ENCODE measurements at regions of chr5 and their contacts with region 1.

Region 1: GRCh38 chr5:129001841-129002526 is 36.7 kb downstream of the SLC27A6 start:
- DNase-seq: no peak
- ATAC-seq: no peak
- H3K4me3 ChIP-seq: no peak overlapping the region
- H3K4me3 Mint-ChIP-seq: no peak overlapping the region
- H3K27ac ChIP-seq: no peak overlapping the region
- H3K27ac Mint-ChIP-seq: no peak overlapping the region
- H3K4me1 ChIP-seq: no peaks in the 10 kb centered on the region
- H3K4me1 Mint-ChIP-seq: peaks cover 2% of the 10 kb centered on the region
- H3K27me3 ChIP-seq: no peaks in the 10 kb centered on the region
- H3K27me3 Mint-ChIP-seq: peaks cover 5% of the 10 kb centered on the region
- CTCF ChIP-seq: no peak

Region 2: DNA sequence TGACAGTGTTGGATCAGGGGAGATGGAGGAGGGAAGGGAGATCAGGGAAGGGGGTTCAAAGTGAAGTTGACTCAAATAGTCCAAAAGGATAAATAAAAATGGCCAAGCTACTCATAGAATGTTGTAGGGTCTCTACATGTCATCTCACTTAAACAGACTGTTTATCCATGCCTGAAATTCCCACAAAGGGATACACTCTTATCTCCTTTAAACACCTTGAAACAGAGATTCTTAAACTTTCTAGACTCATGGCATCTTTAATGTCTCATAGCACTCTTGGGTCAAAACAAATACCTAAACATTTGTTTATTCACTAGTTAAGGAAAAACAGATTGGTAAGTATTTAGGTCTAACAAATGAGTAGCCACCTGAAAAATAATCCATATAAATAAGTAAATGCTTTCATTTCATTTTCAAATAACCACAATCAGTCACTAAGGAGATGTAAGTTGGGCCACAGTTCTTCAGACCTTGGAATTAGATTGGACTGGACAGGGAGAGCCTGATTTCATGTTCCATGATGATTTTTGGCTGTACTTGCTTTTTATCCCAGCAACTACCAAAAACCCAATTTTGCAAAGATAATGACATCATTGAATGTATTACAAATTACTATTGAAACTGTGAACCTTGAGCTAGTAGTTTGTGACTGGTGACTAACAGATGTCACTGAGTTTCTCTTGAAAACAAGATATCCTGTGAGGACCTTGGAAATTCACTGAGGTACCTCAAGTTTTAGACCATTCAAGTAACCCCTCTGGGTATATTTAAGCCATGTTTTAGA is 30.1 kb after region 1 on chr5:
- CTCF ChIA-PET with region 1: no interaction called
- POLR2A ChIA-PET with region 1: no interaction called
- intact Hi-C with region 1: loop called in 1 of 2 experiments (anchors 2 kb)
- DNase-seq: no peak
- ATAC-seq: no peak
- H3K4me3 ChIP-seq: no peak overlapping the region
- H3K4me3 Mint-ChIP-seq: no peak overlapping the region
- H3K27ac ChIP-seq: no peak overlapping the region
- H3K27ac Mint-ChIP-seq: no peak overlapping the region
- H3K4me1 ChIP-seq: no peaks in the 10 kb centered on the region
- H3K4me1 Mint-ChIP-seq: no peaks in the 10 kb centered on the region
- H3K27me3 ChIP-seq: no peaks in the 10 kb centered on the region
- H3K27me3 Mint-ChIP-seq: peaks cover 14% of the 10 kb centered on the region
- CTCF ChIP-seq: no peak

Region 3: GRCh38 chr5:129554134-129554904 is 552.3 kb after region 1 on chr5:
- CTCF ChIA-PET with region 1: no interaction called
- POLR2A ChIA-PET with region 1: no interaction called
- intact Hi-C with region 1: no loop called
- DNase-seq: no peak
- ATAC-seq: no peak
- H3K4me3 ChIP-seq: no peak overlapping the region
- H3K4me3 Mint-ChIP-seq: no peak overlapping the region
- H3K27ac ChIP-seq: no peak overlapping the region
- H3K27ac Mint-ChIP-seq: no peak overlapping the region
- H3K4me1 ChIP-seq: no peaks in the 10 kb centered on the region
- H3K4me1 Mint-ChIP-seq: no peaks in the 10 kb centered on the region
- H3K27me3 ChIP-seq: no peaks in the 10 kb centered on the region
- H3K27me3 Mint-ChIP-seq: no peaks in the 10 kb centered on the region
- CTCF ChIP-seq: no peak

Measured in CD8-positive, alpha-beta T cell (primary cell).